ENCODE measurements at regions of chr12 and their contacts with region 1.

Region 1: DNA sequence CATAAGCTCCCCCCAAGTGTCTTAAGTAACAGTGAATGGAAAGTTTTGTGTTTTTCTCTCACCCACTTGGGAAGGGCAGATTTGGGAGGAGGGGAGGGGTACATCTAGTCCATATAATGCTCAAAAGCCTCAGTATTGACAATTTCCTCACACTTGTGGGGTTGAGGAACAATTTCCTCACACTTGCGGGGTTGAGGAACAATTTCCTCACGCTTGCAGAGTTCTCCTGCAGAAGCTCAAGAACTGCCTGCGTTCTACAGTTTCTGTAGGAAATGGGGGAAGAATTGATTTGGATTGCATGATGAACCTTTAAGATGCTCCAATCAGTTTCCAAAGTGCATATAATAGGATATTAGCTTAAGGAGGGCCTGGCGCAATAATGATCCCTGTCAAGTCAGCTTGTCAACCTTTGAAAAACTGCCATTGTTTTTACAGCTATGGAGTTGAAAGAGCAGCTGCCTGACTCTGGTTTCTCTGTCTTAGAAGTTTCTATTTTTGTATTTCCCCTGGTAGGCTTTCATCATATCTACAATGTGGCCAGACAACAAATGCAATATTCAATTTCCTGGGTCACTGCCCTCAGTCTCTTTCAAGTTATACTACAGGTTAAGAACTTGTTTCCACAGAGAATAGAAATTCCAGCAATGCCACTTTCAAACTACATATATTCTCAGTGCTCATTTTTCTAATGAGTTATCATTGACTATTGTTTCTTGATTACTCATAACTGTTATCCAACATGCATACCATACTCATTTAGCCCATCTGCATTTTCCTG is 66.5 kb downstream of the PLEKHG7 start:
- DNase-seq: no peak
- ATAC-seq: peak in 3 of 4 donors; percentile 52 to 74 (median 52)
- H3K4me3 ChIP-seq: no peak overlapping the region
- H3K27ac ChIP-seq: peak overlapping the region in 7 of 12 donors; percentile 26 to 65 (median 45)
- H3K4me1 ChIP-seq: peaks cover 2 to 36% (median 17%) of the 10 kb centered on the region in 12 donors
- H3K27me3 ChIP-seq: no peaks in the 10 kb centered on the region
- CTCF ChIP-seq: no peak
- POLR2A ChIP-seq: no peak

Region 2: GRCh38 chr12:91877022-91877421 is 892.3 kb before region 1 on chr12:
- intact Hi-C with region 1: loop called in 1 of 10 experiments (anchors 10 kb)
- DNase-seq: peak in 4 of 5 donors; percentile 10 to 58 (median 32)
- ATAC-seq: peak; percentile 37 to 89 (median 57)
- H3K4me3 ChIP-seq: no peak overlapping the region
- H3K27ac ChIP-seq: peak overlapping the region in 1 of 12 donors; percentile 86
- H3K4me1 ChIP-seq: peaks cover 0 to 28% (median 0%) of the 10 kb centered on the region in 12 donors
- H3K27me3 ChIP-seq: no peaks in the 10 kb centered on the region
- CTCF ChIP-seq: no peak
- POLR2A ChIP-seq: no peak

Region 3: GRCh38 chr12:92810370-92810769 is 41.1 kb after region 1 on chr12:
- intact Hi-C with region 1: no loop called
- DNase-seq: no peak
- ATAC-seq: no peak
- H3K4me3 ChIP-seq: no peak overlapping the region
- H3K27ac ChIP-seq: no peak overlapping the region
- H3K4me1 ChIP-seq: no peaks in the 10 kb centered on the region
- H3K27me3 ChIP-seq: no peaks in the 10 kb centered on the region
- CTCF ChIP-seq: no peak
- POLR2A ChIP-seq: no peak

Region 4: GRCh38 chr12:92973601-92974000 is 204.3 kb after region 1 on chr12:
- intact Hi-C with region 1: no loop called
- DNase-seq: no peak
- ATAC-seq: peak in 3 of 4 donors; percentile 29 to 49 (median 35)
- H3K4me3 ChIP-seq: no peak overlapping the region
- H3K27ac ChIP-seq: peak overlapping the region in 1 of 12 donors; percentile 13
- H3K4me1 ChIP-seq: peaks cover 0 to 44% (median 2%) of the 10 kb centered on the region in 12 donors
- H3K27me3 ChIP-seq: no peaks in the 10 kb centered on the region
- CTCF ChIP-seq: no peak
- POLR2A ChIP-seq: no peak

Measured in heart left ventricle (tissue), 16 donors.